ENCODE measurements at regions of chr18 and their contacts with region 1.

Region 1: DNA sequence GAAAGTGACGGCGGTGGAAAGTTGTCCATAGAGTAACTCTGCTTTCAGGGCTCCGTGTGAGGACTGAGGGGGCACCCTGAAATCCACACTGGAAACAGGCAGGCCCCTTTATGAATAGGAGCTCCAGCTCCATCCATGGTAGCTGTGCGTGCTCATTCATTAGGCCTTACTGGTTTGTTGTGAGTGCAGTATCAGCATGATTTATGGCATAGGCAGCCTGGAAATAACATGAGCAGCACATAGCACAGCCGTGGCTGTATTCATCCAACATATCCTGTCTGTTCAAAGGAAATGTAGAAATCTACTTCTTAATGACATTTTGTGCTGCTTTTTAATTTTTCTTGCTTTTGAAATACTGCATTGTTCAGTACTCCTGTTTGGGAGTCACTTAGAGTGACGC is 414.8 kb upstream of the RAB12 start:
- DNase-seq: no peak
- H3K4me3 ChIP-seq: no peak overlapping the region
- H3K27ac ChIP-seq: no peak overlapping the region
- H3K4me1 ChIP-seq: no peaks in the 10 kb centered on the region
- H3K27me3 ChIP-seq: no peaks in the 10 kb centered on the region
- CTCF ChIP-seq: no peak
- POLR2A ChIP-seq: no peak

Region 2: GRCh38 chr18:8254654-8255053 is 60.2 kb after region 1 on chr18:
- intact Hi-C with region 1: loop called in 1 of 2 experiments (anchors 10 kb)
- DNase-seq: no peak
- H3K4me3 ChIP-seq: no peak overlapping the region
- H3K27ac ChIP-seq: no peak overlapping the region
- H3K4me1 ChIP-seq: no peaks in the 10 kb centered on the region
- H3K27me3 ChIP-seq: no peaks in the 10 kb centered on the region
- CTCF ChIP-seq: no peak
- POLR2A ChIP-seq: no peak

Measured in adrenal gland (tissue), 19 donors.